ENCODE measurements at regions of chr15 and their contacts with region 1.

Region 1: GRCh38 chr15:31488426-31489204 is 162.0 kb downstream of the KLF13 start:
- DNase-seq: peak; percentile 38
- ATAC-seq: peak; percentile 79; the same call in 1 of the 2 replicates
- H3K4me3 ChIP-seq: no peak overlapping the region
- H3K27ac ChIP-seq: no peak overlapping the region
- H3K4me1 ChIP-seq: no peaks in the 10 kb centered on the region; the same call in 1 of the 2 replicates
- H3K27me3 ChIP-seq: no peaks in the 10 kb centered on the region; the same call in none of the 2 replicates
- CTCF ChIP-seq: peak; percentile 83

Region 2: GRCh38 chr15:31197497-31198414 is 290.9 kb before region 1 on chr15:
- CTCF ChIA-PET with region 1: interaction called, 6 read pairs
- POLR2A ChIA-PET with region 1: no interaction called
- in situ Hi-C with region 1: no loop called
- intact Hi-C with region 1: loop called (anchors 5 kb)
- DNase-seq: no peak
- ATAC-seq: peak; percentile 72
- H3K4me3 ChIP-seq: no peak overlapping the region
- H3K27ac ChIP-seq: no peak overlapping the region
- H3K4me1 ChIP-seq: no peaks in the 10 kb centered on the region
- H3K27me3 ChIP-seq: no peaks in the 10 kb centered on the region
- CTCF ChIP-seq: peak; percentile 90

Region 3: GRCh38 chr15:31435261-31435911 is 53.2 kb before region 1 on chr15:
- CTCF ChIA-PET with region 1: interaction called, 5 read pairs
- POLR2A ChIA-PET with region 1: no interaction called
- in situ Hi-C with region 1: no loop called
- intact Hi-C with region 1: loop called (anchors 2 kb)
- DNase-seq: no peak
- ATAC-seq: peak; percentile 87
- H3K4me3 ChIP-seq: peak overlapping the region in 1 of 2 experiments; percentile 34; a peak in 2 of 4 replicates
- H3K27ac ChIP-seq: peak overlapping the region; percentile 51; the same call in 1 of the 2 replicates
- H3K4me1 ChIP-seq: 0 out of 2 replicates have a peak, but pooled peaks cover 3% of the 10 kb centered on the region
- H3K27me3 ChIP-seq: no peaks in the 10 kb centered on the region
- CTCF ChIP-seq: peak; percentile 90

Measured in Panc1 (cell line).